Esophagus muscularis mucosa (tissue), 4 donors: ENCODE measurements at regions of chr6 and their contacts with region 1.

Region 1: DNA sequence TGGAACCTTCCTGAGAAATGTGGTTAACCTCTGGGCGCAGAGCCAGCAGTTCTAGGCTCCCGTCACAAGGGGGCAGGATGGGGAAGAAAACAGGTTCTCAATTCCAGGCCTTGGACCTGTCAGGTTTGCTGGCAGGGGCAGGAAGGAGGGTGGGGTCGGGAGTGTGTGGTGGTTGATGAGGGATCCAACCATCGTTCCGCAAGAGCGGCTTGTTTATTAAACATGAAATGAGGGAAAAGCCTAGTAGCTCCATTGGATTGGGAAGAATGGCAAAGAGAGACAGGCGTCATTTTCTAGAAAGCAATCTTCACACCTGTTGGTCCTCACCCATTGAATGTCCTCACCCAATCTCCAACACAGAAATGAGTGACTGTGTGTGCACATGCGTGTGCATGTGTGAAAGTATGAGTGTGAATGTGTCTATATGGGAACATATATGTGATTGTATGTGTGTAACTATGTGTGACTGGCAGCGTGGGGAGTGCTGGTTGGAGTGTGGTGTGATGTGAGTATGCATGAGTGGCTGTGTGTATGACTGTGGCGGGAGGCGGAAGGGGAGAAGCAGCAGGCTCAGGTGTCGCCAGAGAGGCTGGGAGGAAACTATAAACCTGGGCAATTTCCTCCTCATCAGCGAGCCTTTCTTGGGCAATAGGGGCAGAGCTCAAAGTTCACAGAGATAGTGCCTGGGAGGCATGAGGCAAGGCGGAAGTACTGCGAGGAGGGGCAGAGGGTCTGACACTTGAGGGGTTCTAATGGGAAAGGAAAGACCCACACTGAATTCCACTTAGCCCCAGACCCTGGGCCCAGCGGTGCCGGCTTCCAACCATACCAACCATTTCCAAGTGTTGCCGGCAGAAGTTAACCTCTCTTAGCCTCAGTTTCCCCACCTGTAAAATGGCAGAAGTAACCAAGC is 29.6 kb downstream of the SRSF3 start:
- DNase-seq: peak; percentile 97
- H3K4me3 ChIP-seq: no peak overlapping the region
- H3K27ac ChIP-seq: peak overlapping the region in 1 of 4 donors; percentile 45
- H3K4me1 ChIP-seq: peaks cover 43 to 58% (median 53%) of the 10 kb centered on the region in 4 donors
- H3K27me3 ChIP-seq: no peaks in the 10 kb centered on the region
- CTCF ChIP-seq: peak; percentile 88 to 92 (median 92)
- EP300 ChIP-seq: no peak
- POLR2A ChIP-seq: no peak

Region 2: GRCh38 chr6:36678518-36679027 is 54.8 kb after region 1 on chr6 and contains the start of gene CDKN1A:
- intact Hi-C with region 1: loop called (anchors 1 kb)
- DNase-seq: peak; percentile 96
- H3K4me3 ChIP-seq: peak within 1 kb of the TSS; percentile 85 to 94 (median 90)
- H3K27ac ChIP-seq: peak within 1 kb of the TSS; percentile 95 to 99 (median 98)
- H3K4me1 ChIP-seq: peaks cover 34 to 61% (median 57%) of the 10 kb centered on the region in 4 donors
- H3K27me3 ChIP-seq: peaks cover 0 to 3% (median 0%) of the 10 kb centered on the region in 4 donors
- CTCF ChIP-seq: no peak
- EP300 ChIP-seq: no peak
- POLR2A ChIP-seq: peak; percentile 98
- total RNA-seq, gene CDKN1A: 47.3 to 613 (median 93.3) TPM

Region 3: GRCh38 chr6:36724514-36725390 is 100.9 kb after region 1 on chr6:
- intact Hi-C with region 1: loop called (anchors 5 kb)
- DNase-seq: no peak
- H3K4me3 ChIP-seq: no peak overlapping the region
- H3K27ac ChIP-seq: no peak overlapping the region
- H3K4me1 ChIP-seq: peaks cover 0 to 10% (median 4%) of the 10 kb centered on the region in 4 donors
- H3K27me3 ChIP-seq: no peaks in the 10 kb centered on the region
- CTCF ChIP-seq: peak; percentile 34 to 54 (median 50)
- EP300 ChIP-seq: no peak
- POLR2A ChIP-seq: no peak

Region 4: GRCh38 chr6:36759148-36759759 is 135.5 kb after region 1 on chr6:
- intact Hi-C with region 1: loop called (anchors 2 kb)
- DNase-seq: peak; percentile 94
- H3K4me3 ChIP-seq: no peak overlapping the region
- H3K27ac ChIP-seq: no peak overlapping the region
- H3K4me1 ChIP-seq: peaks cover 3 to 18% (median 16%) of the 10 kb centered on the region in 4 donors
- H3K27me3 ChIP-seq: no peaks in the 10 kb centered on the region
- CTCF ChIP-seq: peak in 2 of 3 experiments; percentile 96
- EP300 ChIP-seq: no peak
- POLR2A ChIP-seq: no peak

Region 5: DNA sequence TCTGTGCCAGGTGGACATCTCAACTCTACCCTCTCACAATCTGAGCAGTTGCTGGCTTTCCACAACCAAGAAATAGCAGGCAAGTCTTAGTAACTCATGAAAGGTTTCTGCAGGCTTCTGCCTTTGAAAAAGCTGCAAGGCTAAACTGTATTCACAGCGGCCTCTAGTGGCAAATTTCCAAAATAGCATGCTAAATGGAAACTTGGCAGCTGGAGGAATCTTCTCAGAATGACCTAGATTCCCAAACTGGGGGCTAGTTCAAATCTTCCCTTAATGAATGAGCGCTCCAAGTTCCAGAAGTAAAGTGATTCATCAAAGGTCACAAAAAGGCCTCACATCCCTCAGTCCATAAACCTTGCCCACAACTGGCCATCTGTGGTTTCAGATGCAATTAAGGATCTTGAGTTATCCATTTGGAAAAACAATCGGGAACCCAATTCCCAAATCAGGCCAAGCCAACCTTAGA is 227.4 kb after region 1 on chr6:
- intact Hi-C with region 1: loop called (anchors 10 kb)
- DNase-seq: no peak
- H3K4me3 ChIP-seq: no peak overlapping the region
- H3K27ac ChIP-seq: peak overlapping the region; percentile 37 to 60 (median 57)
- H3K4me1 ChIP-seq: peaks cover 29 to 50% (median 40%) of the 10 kb centered on the region in 4 donors
- H3K27me3 ChIP-seq: no peaks in the 10 kb centered on the region
- CTCF ChIP-seq: peak; percentile 60 to 83 (median 71)
- EP300 ChIP-seq: no peak
- POLR2A ChIP-seq: no peak